Activated CD4-positive, alpha-beta T cell treated with anti-CD3 and anti-CD28 coated beads for 36 hours (primary cell): ENCODE measurements at regions of chr11 and their contacts with region 1.

Region 1: GRCh38 chr11:31958076-31958735 is 132.7 kb upstream of the RCN1 start:
- DNase-seq: peak; percentile 83
- ATAC-seq: peak; percentile 53
- H3K4me3 Mint-ChIP-seq: no peak overlapping the region
- H3K27ac Mint-ChIP-seq: no peak overlapping the region
- H3K4me1 Mint-ChIP-seq: no peaks in the 10 kb centered on the region
- H3K27me3 Mint-ChIP-seq: no peaks in the 10 kb centered on the region

Region 2: GRCh38 chr11:31641477-31642062 is 316.6 kb before region 1 on chr11:
- CTCF ChIA-PET with region 1: no interaction called
- POLR2A ChIA-PET with region 1: no interaction called
- intact Hi-C with region 1: loop called in 1 of 2 experiments (anchors 5 kb)
- DNase-seq: peak; percentile 10
- ATAC-seq: no peak
- H3K4me3 Mint-ChIP-seq: no peak overlapping the region
- H3K27ac Mint-ChIP-seq: no peak overlapping the region
- H3K4me1 Mint-ChIP-seq: no peaks in the 10 kb centered on the region
- H3K27me3 Mint-ChIP-seq: no peaks in the 10 kb centered on the region